ENCODE measurements at regions of chr16 and their contacts with region 1.

Region 1: GRCh38 chr16:71610936-71611871 is 14.8 kb upstream of the MARVELD3 start:
- DNase-seq: peak; percentile 59
- ATAC-seq: peak; percentile 93
- H3K4me3 ChIP-seq: peak overlapping the region; percentile 29 to 43
- H3K27ac ChIP-seq: no peak overlapping the region
- H3K4me1 ChIP-seq: peaks cover 0 to 31% of the 10 kb centered on the region in 2 experiments; a peak in 2 of 4 replicates
- H3K27me3 ChIP-seq: no peaks in the 10 kb centered on the region
- CTCF ChIP-seq: peak; percentile 81 to 89 (median 84)
- POLR2A ChIP-seq: no peak
- RAD21 ChIP-seq: peak; percentile 92

Region 2: GRCh38 chr16:71499775-71500364 is 111.3 kb before region 1 on chr16:
- CTCF ChIA-PET with region 1: interaction called, 46 read pairs
- POLR2A ChIA-PET with region 1: no interaction called
- RAD21 ChIA-PET with region 1: interaction called in 1 of 2 experiments, 3 read pairs
- intact Hi-C with region 1: loop called (anchors 5 kb)
- DNase-seq: peak; percentile 57
- ATAC-seq: peak; percentile 86
- H3K4me3 ChIP-seq: no peak overlapping the region
- H3K27ac ChIP-seq: no peak overlapping the region
- H3K4me1 ChIP-seq: 0 out of 4 replicates have a peak, but pooled peaks cover 0 to under 1% of the 10 kb centered on the region in 2 experiments
- H3K27me3 ChIP-seq: no peaks in the 10 kb centered on the region
- CTCF ChIP-seq: peak; percentile 63 to 82 (median 75)
- POLR2A ChIP-seq: no peak
- RAD21 ChIP-seq: peak; percentile 91

Region 3: GRCh38 chr16:71564155-71564967 is 46.8 kb before region 1 on chr16:
- CTCF ChIA-PET with region 1: interaction called, 105 read pairs
- POLR2A ChIA-PET with region 1: interaction called, 13 read pairs
- RAD21 ChIA-PET with region 1: interaction called in 1 of 2 experiments, 8 read pairs
- intact Hi-C with region 1: loop called (anchors 1 kb)
- DNase-seq: no peak
- ATAC-seq: peak; percentile 6
- H3K4me3 ChIP-seq: peak overlapping the region; percentile 65 to 69
- H3K27ac ChIP-seq: peak overlapping the region; percentile 31; the same call in 1 of the 2 replicates
- H3K4me1 ChIP-seq: peaks cover 14 to 18% of the 10 kb centered on the region in 2 experiments
- H3K27me3 ChIP-seq: no peaks in the 10 kb centered on the region
- CTCF ChIP-seq: no peak
- POLR2A ChIP-seq: no peak
- RAD21 ChIP-seq: no peak

Region 4: GRCh38 chr16:71626018-71626857 is 15.0 kb after region 1 on chr16 and contains the start of gene MARVELD3:
- CTCF ChIA-PET with region 1: interaction called, 17 read pairs
- POLR2A ChIA-PET with region 1: interaction called, 11 read pairs
- RAD21 ChIA-PET with region 1: interaction called in 1 of 2 experiments, 4 read pairs
- intact Hi-C with region 1: no loop called
- DNase-seq: peak; percentile 76
- ATAC-seq: peak; percentile 70
- H3K4me3 ChIP-seq: peak within 1 kb of the TSS; percentile 84 to 95
- H3K27ac ChIP-seq: peak within 1 kb of the TSS; percentile 80
- H3K4me1 ChIP-seq: peaks cover 7 to 12% of the 10 kb centered on the region in 2 experiments; a peak in 3 of 4 replicates
- H3K27me3 ChIP-seq: no peaks in the 10 kb centered on the region
- CTCF ChIP-seq: peak; percentile 11 to 22 (median 18); a peak in 2 of 6 replicates
- POLR2A ChIP-seq: no peak
- RAD21 ChIP-seq: no peak
- total RNA-seq, gene MARVELD3: 20.9 TPM

Region 5: DNA sequence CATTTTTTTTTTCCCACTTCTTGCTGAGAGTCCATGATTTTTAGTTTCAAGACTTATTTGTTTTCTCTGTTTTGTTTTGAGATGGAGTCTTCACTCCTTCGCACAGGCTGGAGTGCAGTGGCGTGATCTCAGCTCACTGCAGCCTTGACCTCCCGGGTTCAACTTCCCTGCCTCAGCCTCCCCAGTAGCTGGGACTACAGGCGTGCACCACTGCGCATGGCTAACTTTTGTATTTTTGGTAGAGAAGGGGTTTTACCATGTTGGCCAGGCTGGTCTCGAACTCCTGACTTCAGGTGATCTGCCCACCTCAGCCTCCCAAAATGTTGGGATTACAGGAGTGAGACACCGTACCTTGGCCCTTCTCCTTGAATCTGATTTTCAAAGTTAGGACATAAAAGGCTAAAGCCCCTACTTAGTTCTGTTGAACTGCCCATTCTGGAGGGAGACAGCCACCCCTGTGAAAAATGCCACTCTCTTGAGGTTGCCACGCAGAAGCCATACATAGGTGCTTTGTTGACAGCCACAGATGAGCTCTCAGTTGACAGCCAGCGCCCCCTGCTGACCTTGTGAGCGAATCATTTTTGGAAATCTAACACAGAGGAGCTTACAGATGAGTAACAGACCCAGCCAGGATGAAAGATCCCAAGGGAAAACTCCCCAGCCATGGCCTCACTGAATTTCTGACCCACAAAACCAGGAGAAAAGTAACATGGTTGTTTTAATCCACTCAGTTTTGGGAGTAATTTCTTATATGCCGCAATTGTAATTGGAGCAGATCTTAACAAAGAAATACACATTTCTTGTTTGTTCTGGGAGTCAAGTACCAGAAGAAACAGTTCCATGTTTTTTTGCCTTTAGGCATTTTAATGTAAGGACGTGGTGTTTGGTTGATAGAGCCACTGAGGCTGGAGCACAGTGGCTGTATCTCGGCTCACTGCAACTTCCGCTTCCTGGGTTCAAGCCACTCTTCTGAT is 350.1 kb after region 1 on chr16:
- CTCF ChIA-PET with region 1: interaction called, 12 read pairs
- POLR2A ChIA-PET with region 1: no interaction called
- RAD21 ChIA-PET with region 1: interaction called in 1 of 2 experiments, 3 read pairs
- intact Hi-C with region 1: no loop called
- DNase-seq: peak; percentile 84
- ATAC-seq: peak; percentile 99
- H3K4me3 ChIP-seq: no peak overlapping the region
- H3K27ac ChIP-seq: no peak overlapping the region
- H3K4me1 ChIP-seq: peaks cover 0 to 5% of the 10 kb centered on the region in 2 experiments; a peak in 1 of 4 replicates
- H3K27me3 ChIP-seq: no peaks in the 10 kb centered on the region
- CTCF ChIP-seq: peak; percentile 82 to 89 (median 86)
- POLR2A ChIP-seq: no peak
- RAD21 ChIP-seq: peak; percentile 95